ENCODE measurements at regions of chr10 and their contacts with region 1.

Region 1: GRCh38 chr10:37495415-37495814 is 362.0 kb downstream of the ZNF248 start:
- H3K4me3 ChIP-seq: no peak overlapping the region
- H3K27ac ChIP-seq: no peak overlapping the region
- H3K4me1 ChIP-seq: no peaks in the 10 kb centered on the region
- CTCF ChIP-seq: no peak

Region 2: GRCh38 chr10:35643151-35644044 is 1852.0 kb before region 1 on chr10:
- CTCF ChIA-PET with region 1: no interaction called
- POLR2A ChIA-PET with region 1: interaction called, 11 read pairs
- H3K4me3 ChIP-seq: peak overlapping the region; percentile 60
- H3K27ac ChIP-seq: peak overlapping the region; percentile 90
- H3K4me1 ChIP-seq: peaks cover 6% of the 10 kb centered on the region
- CTCF ChIP-seq: 0 out of 2 replicates have a peak, but pooled peaks have one; percentile 8

Region 3: DNA sequence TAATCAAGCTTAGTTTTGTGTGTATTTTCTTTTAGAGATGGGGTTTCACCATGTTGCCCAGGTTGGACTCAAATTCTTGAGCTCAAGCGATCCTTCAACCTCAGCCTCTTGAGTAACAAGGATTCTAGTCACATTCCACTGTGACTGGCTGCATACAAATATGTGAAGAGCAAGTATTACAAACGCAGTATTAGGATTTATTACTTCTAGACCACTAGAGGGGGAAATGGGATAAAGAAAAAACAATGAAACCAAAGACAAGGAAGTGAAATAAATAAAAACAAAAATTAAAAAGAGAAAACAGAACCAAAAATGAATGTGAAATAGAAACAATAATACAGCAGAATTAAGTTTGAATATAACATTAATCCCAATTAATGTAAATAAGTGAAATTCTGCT is 61.3 kb before region 1 on chr10:
- CTCF ChIA-PET with region 1: interaction called, 32 read pairs
- POLR2A ChIA-PET with region 1: no interaction called
- H3K4me3 ChIP-seq: no peak overlapping the region
- H3K27ac ChIP-seq: no peak overlapping the region
- H3K4me1 ChIP-seq: no peaks in the 10 kb centered on the region
- CTCF ChIP-seq: no peak

Region 4: DNA sequence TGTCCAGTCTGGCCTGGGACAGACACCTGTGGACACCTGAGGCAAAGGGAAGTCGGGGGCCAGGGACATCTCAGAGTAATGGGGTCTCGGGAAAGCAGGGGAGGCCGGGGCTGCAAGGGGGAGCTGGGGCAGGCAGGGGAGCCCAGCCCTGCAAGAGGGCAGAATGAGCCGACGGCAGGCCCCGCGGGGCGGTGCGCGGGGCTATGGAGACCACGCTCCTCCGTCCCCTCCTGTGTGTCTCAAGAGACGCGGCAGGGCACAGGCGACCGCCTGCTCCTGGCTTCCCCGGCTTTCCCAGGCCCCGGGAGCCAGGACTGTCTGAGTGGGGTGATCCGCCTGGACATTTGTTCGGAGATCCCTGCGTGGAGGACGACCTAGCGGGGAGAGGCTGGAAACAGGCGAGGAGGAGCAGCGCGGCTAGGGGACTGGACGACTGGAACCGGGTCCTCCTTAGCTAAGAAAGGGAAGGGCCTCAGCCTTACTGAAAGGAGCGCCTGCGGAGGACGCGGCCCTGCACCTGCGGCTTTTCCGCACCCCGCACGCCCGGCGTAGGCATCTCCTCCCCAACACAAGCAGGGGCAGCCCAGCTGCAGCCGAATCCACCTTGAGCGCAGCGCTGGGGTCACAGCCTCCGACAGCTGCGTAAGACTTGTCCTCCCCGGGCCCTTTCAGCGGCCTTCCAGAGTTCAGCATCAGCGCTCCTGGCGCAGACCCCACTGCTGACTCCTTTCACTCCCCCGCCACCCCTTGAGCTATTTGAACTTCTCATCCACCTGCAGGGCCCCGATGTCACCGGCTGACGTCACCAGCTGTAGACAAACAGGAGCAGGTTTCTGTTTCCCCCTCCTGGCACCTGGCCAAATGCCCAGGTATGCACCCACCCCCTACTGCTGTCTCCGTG is 185.6 kb after region 1 on chr10:
- CTCF ChIA-PET with region 1: no interaction called
- POLR2A ChIA-PET with region 1: no interaction called
- H3K4me3 ChIP-seq: no peak overlapping the region
- H3K27ac ChIP-seq: no peak overlapping the region
- H3K4me1 ChIP-seq: no peaks in the 10 kb centered on the region
- CTCF ChIP-seq: no peak

Region 5: DNA sequence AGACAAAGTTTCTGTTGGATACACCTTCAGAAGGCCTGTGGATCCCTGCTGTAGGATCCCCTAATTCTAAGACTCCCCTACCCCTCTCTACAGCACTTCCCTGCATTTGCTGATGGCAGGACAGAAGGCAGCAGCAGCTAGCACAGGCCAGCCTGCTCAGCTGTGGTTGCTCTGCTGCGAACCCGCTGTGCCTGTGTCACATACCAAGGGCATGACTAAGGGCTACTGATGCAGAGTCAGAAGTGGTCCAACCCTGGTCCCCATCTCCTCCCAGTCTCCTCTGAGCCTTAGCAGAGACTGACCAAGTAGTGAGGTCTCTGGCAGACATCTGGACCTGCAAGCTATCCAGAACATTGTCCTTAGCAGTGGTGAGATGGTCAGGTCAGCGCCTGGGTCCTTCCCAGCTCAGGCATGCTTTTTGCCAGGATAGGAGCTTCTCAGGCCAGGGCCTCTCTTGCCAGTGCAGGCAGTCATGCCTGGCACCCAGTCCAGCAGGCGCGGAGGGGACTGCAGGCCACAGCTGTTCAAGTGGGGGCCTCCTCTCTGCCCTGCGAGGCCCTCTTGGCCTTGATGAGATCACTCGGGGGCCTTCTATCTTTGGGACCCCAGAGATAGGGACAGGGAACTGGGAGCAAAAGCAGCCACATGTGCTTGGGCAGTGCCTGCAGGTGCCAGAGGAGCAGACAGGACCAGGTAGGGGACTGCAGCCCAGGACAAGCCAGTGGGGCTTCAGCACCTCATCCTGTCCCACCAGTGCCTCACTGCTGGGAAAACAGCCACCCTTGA is 215.6 kb after region 1 on chr10:
- CTCF ChIA-PET with region 1: no interaction called
- POLR2A ChIA-PET with region 1: no interaction called
- H3K4me3 ChIP-seq: no peak overlapping the region
- H3K27ac ChIP-seq: no peak overlapping the region
- H3K4me1 ChIP-seq: no peaks in the 10 kb centered on the region
- CTCF ChIP-seq: no peak

Measured in HEK293 (cell line).